Activated naive CD4-positive, alpha-beta T cell treated with anti-CD3 and anti-CD28 coated beads for 36 hours (primary cell): ENCODE measurements at regions of chr19 and their contacts with region 1.

Region 1: GRCh38 chr19:41570639-41571112 is 5.3 kb upstream of the CEACAM21 start:
- DNase-seq: peak; percentile 91
- H3K4me3 Mint-ChIP-seq: no peak overlapping the region
- H3K27ac Mint-ChIP-seq: peak overlapping the region; percentile 28
- H3K4me1 Mint-ChIP-seq: peaks cover 35% of the 10 kb centered on the region
- H3K27me3 Mint-ChIP-seq: no peaks in the 10 kb centered on the region

Region 2: DNA sequence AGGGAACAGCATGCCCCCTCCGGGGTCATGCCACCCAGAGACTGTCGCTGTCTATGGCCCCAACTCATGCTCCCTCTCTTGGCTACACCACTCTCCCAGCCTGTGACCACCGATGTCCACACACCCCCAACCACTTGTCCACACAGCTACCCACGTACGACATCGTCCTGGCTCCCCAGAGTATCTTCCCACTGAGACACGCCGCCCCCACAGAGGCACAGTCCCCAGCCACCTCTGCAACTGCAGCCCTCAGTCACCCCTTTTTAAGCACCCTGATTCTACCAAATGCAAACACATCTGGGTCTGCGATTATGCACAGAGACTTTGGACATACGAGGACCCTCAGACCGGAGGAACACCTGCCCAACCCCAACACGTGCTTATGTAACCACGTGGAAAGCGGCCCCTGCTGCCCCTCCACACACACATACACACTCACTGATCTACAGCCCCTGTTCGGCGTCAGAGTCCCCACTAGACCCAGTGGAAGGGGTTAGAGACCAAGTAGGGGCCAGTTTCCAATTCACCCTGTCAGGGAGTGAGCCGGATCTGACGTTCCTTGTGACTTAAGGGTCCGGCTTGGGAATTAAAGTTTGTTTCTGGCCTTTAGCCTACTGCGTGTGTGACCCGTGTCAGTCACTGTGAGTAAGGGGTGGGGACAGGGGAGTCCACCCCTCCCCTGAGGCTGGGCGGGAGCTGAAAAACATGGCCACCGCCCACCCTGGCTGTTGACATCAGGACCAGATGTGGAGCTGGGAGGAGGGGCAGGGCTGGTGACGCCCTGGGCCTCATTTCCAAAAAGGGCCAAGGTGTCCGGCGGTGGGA is 363.5 kb before region 1 on chr19:
- CTCF ChIA-PET with region 1: no interaction called
- intact Hi-C with region 1: loop called (anchors 10 kb)
- DNase-seq: no peak
- H3K4me3 Mint-ChIP-seq: no peak overlapping the region
- H3K27ac Mint-ChIP-seq: no peak overlapping the region
- H3K4me1 Mint-ChIP-seq: peaks cover 4% of the 10 kb centered on the region
- H3K27me3 Mint-ChIP-seq: no peaks in the 10 kb centered on the region

Region 3: GRCh38 chr19:41457241-41457640 is 113.4 kb before region 1 on chr19:
- CTCF ChIA-PET with region 1: interaction called, 185 read pairs
- intact Hi-C with region 1: no loop called
- DNase-seq: no peak
- H3K4me3 Mint-ChIP-seq: no peak overlapping the region
- H3K27ac Mint-ChIP-seq: no peak overlapping the region
- H3K4me1 Mint-ChIP-seq: peaks cover 15% of the 10 kb centered on the region
- H3K27me3 Mint-ChIP-seq: no peaks in the 10 kb centered on the region

Region 4: DNA sequence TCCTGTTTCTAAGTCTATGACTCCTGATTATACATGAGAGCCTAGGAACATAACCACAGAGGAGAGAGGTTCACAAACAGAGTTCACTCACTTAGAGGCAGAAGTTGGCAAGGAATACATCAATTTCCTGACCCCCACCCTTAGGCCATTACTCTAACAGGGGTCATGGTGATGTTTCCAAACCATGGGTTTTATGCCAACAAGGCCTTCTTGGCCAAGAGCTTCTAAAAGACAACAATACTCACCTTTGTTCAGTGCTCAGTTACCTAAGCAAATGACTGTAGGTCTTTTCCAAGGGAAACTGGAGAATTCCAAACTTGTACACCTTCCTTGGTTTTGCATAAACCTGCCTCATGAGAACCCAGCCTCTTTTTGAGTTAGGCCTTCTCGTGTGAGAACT is 75.1 kb before region 1 on chr19:
- CTCF ChIA-PET with region 1: no interaction called
- intact Hi-C with region 1: no loop called
- DNase-seq: no peak
- H3K4me3 Mint-ChIP-seq: no peak overlapping the region
- H3K27ac Mint-ChIP-seq: no peak overlapping the region
- H3K4me1 Mint-ChIP-seq: no peaks in the 10 kb centered on the region
- H3K27me3 Mint-ChIP-seq: peaks cover 7% of the 10 kb centered on the region

Region 5: DNA sequence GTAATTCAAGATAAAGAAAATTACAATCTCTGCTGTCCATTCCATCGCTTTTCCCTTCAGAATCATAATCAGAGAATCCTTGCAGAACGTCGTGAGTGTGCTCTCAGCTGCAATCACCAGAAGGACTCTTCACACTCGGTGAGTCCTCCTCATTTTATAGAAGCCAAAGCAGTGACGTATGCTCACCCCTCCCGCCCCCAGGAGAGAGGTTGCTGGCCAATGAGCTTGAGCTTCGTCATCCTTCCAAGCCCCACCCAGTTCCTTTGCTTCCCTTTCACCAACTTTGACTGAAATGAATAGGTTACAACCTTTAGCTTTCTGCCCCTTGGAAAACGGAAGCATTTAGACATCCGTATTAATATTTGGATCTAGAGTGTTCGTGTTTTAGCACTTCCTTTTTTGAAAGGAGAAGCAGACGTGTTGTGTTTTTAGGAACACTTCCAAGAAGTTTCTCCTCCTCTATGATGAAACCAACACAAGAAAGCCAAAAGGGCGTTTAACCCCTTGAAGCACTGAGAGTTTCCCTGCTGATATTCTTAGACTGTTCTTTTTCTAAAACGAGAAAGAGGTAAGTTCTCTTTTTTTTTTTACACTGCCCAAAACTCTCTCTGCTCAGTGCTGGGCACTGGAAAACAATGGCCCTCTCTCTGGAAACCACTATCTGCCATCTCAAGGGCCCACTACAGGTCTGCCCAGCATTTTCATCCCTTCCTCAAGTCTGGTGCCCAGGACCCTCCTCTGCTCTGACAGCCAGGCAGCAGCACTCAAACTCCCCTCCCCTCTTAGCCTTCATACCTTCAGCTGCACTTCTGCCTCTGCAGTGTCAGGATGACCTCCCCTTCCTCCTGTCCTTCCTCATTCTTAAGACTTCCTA is 39.0 kb before region 1 on chr19:
- CTCF ChIA-PET with region 1: interaction called, 171 read pairs
- intact Hi-C with region 1: no loop called
- DNase-seq: peak; percentile 95
- H3K4me3 Mint-ChIP-seq: peak overlapping the region; percentile 78
- H3K27ac Mint-ChIP-seq: peak overlapping the region; percentile 90
- H3K4me1 Mint-ChIP-seq: peaks cover 52% of the 10 kb centered on the region
- H3K27me3 Mint-ChIP-seq: no peaks in the 10 kb centered on the region

Region 6: GRCh38 chr19:41548954-41549688 is 21.6 kb before region 1 on chr19:
- CTCF ChIA-PET with region 1: interaction called, 45 read pairs
- intact Hi-C with region 1: no loop called
- DNase-seq: peak; percentile 90
- H3K4me3 Mint-ChIP-seq: peak overlapping the region; percentile 99
- H3K27ac Mint-ChIP-seq: peak overlapping the region; percentile 100
- H3K4me1 Mint-ChIP-seq: peaks cover 57% of the 10 kb centered on the region
- H3K27me3 Mint-ChIP-seq: no peaks in the 10 kb centered on the region

Region 7: DNA sequence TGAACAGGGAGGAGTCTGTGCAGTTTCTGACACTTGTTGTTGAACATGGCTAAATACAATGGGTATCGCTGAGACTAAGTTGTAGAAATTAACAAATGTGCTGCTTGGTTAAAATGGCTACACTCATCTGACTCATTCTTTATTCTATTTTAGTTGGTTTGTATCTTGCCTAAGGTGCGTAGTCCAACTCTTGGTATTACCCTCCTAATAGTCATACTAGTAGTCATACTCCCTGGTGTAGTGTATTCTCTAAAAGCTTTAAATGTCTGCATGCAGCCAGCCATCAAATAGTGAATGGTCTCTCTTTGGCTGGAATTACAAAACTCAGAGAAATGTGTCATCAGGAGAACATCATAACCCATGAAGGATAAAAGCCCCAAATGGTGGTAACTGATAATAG is 200.7 kb after region 1 on chr19:
- CTCF ChIA-PET with region 1: no interaction called
- intact Hi-C with region 1: no loop called
- DNase-seq: no peak
- H3K4me3 Mint-ChIP-seq: no peak overlapping the region
- H3K27ac Mint-ChIP-seq: no peak overlapping the region
- H3K4me1 Mint-ChIP-seq: peaks cover 36% of the 10 kb centered on the region
- H3K27me3 Mint-ChIP-seq: peaks cover 50% of the 10 kb centered on the region